Pancreas (tissue), 10 donors: ENCODE measurements at regions of chr3 and their contacts with region 1.

Region 1: GRCh38 chr3:156674046-156674910 is at the start of gene TIPARP:
- DNase-seq: peak; percentile 99 to 100 (median 99)
- ATAC-seq: peak; percentile 92 to 96 (median 92)
- H3K4me3 ChIP-seq: peak within 1 kb of the TSS; percentile 76 to 91 (median 83)
- H3K27ac ChIP-seq: peak within 1 kb of the TSS; percentile 89 to 97 (median 93)
- H3K4me1 ChIP-seq: peaks cover 0 to 23% (median 19%) of the 10 kb centered on the region in 3 donors
- H3K27me3 ChIP-seq: no peaks in the 10 kb centered on the region
- CTCF ChIP-seq: peak; percentile 45 to 62 (median 54)
- total RNA-seq, gene TIPARP: 7.4 to 15.0 (median 10.3) TPM

Region 2: DNA sequence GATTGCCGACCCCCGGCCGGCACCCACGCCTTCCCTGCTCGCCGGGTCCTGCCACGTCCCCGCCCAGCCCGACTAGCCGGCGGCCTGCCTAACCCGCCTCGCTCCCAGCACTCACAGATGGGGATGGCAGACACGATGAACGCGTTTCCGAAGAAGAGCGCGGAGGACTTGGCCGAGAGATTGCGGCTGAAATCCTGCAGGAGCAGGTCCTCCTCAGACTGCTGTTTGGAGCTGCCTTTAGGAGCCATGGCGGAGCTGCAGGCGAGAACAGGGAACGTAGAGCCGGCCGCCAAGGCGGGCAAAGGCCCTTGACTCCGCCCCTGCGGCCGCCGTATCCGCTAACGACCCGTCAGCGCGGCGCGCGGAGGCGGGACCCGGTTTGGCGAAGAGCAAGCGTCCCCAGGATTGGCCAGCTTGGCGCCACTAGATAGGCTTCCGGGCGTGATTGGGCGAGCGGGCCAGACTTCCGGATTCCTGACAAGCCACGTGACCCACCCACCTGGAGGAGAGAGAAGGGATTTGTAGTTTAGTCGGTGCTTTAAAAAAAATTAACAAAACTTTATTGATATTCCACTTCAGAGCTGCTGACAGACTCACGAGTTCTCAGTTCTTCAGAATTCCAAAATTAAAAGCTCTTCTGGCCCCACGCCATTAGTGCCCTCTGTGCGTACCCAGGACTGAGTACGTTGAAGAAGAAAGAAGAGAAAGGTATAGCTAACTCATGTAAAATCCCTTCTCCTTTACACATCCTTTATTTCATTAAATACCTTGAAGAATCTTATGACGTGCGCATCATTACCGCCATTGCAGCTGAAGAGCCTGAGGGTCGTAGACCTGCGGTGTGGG is 119.2 kb before region 1 on chr3 and contains the start of gene SSR3:
- intact Hi-C with region 1: loop called in 2 of 3 experiments (anchors 10 kb)
- DNase-seq: peak; percentile 99
- ATAC-seq: peak; percentile 97 to 99 (median 98)
- H3K4me3 ChIP-seq: peak within 1 kb of the TSS; percentile 50 to 83 (median 76)
- H3K27ac ChIP-seq: peak within 1 kb of the TSS; percentile 67 to 94 (median 76)
- H3K4me1 ChIP-seq: peaks cover 21 to 42% (median 37%) of the 10 kb centered on the region in 3 donors
- H3K27me3 ChIP-seq: no peaks in the 10 kb centered on the region
- CTCF ChIP-seq: peak in 2 of 4 donors; percentile 10 to 40
- total RNA-seq, gene SSR3: 144 to 251 (median 193) TPM

Region 3: DNA sequence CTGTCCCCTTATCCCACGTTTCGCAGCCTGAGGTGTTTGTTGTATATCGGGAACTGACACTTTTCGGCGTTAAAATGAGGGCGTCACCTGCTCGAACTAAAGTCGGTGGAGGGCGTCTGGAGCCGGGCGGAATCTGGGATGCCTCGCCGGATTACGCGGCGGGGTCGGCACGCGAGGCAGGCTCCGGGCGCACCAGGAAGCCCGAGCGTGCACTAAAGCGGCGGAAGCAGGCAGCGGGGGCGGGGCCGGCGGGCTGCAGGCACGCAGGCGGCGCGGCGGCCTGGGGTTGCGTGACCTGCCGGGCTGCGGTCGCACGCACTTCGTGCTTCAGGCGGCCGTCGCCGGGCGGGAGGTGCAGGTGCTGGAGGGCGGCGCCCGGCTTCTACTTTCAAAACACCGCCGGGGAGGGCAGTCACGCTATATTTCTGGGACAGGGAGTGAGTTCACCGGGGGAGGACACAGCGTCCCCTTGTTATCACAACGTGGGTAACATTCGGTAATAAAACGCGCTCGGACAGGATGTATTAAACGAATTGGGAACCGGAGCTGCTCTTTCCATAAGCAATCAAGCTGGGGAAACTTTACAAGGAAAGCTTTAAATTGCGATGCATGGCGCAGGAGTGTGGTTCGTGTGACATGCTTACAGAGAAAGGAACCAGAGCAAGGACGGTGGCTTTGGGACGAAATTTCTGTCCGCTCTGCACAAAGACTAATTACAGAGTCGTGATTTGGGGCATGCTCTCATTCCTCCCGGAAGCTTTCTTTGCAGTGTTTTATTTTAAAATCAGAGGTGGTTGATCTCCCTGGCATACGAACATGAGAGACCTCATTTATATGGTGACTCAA is 142.7 kb after region 1 on chr3:
- intact Hi-C with region 1: loop called in 1 of 3 experiments (anchors 10 kb)
- DNase-seq: peak; percentile 83 to 92 (median 89)
- ATAC-seq: peak; percentile 85 to 91 (median 88)
- H3K4me3 ChIP-seq: peak overlapping the region; percentile 40 to 75 (median 52)
- H3K27ac ChIP-seq: peak overlapping the region; percentile 91 to 96 (median 94)
- H3K4me1 ChIP-seq: peaks cover 22 to 37% (median 33%) of the 10 kb centered on the region in 3 donors
- H3K27me3 ChIP-seq: no peaks in the 10 kb centered on the region
- CTCF ChIP-seq: no peak

Region 4: GRCh38 chr3:157081681-157082210 is 407.5 kb after region 1 on chr3:
- intact Hi-C with region 1: loop called in 2 of 3 experiments (anchors 10 kb)
- DNase-seq: peak; percentile 73 to 97 (median 90)
- ATAC-seq: peak; percentile 93 to 98 (median 95)
- H3K4me3 ChIP-seq: no peak overlapping the region
- H3K27ac ChIP-seq: no peak overlapping the region
- H3K4me1 ChIP-seq: peaks cover 4 to 10% (median 4%) of the 10 kb centered on the region in 3 donors
- H3K27me3 ChIP-seq: no peaks in the 10 kb centered on the region
- CTCF ChIP-seq: peak; percentile 83 to 95 (median 90)

Region 5: DNA sequence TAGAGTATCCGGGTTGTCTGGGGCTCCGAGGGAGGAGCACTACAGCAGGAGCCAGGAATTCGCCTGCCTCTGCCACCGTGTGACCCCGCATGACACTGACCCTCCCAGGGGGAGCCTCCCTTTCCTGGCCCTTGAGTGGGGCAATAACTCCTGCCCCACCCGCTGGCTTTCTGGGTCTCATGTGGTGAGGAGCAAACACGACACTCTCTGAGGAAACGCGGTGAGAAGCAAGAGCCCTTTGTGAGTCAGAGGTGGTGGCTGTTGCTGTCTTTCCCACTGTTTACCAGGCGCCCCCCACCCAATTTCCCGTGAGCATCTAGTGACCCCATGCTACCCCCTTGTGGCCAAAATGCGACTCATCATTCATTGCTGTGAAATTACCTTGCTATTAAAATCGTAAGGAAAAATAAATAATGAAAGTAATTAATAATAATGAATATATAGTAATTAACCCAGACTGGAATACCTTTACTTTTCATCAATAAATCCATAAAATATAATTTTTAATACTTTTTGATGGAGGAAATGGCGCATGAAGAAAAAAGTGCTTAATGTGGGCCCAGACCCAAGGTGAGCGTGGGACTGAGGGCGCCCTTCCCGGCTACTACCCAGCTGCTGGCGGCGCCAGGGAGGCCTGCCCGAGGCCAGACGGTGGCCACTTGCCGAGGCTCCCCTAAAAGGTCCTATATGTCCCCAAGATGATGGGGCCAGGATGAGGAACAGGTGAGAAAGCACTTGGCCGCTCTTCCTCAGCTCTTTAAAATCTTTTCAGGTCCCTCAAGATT is 456.4 kb after region 1 on chr3:
- intact Hi-C with region 1: loop called in 1 of 3 experiments (anchors 10 kb)
- DNase-seq: peak in 2 of 6 donors; percentile 55 to 65
- ATAC-seq: peak in 1 of 4 donors; percentile 3
- H3K4me3 ChIP-seq: no peak overlapping the region
- H3K27ac ChIP-seq: peak overlapping the region; percentile 47 to 88 (median 80)
- H3K4me1 ChIP-seq: peaks cover 52 to 79% (median 74%) of the 10 kb centered on the region in 3 donors
- H3K27me3 ChIP-seq: no peaks in the 10 kb centered on the region
- CTCF ChIP-seq: peak in 3 of 4 donors; percentile 32 to 43 (median 34)